ENCODE measurements at regions of chr15 and their contacts with region 1.

Region 1: DNA sequence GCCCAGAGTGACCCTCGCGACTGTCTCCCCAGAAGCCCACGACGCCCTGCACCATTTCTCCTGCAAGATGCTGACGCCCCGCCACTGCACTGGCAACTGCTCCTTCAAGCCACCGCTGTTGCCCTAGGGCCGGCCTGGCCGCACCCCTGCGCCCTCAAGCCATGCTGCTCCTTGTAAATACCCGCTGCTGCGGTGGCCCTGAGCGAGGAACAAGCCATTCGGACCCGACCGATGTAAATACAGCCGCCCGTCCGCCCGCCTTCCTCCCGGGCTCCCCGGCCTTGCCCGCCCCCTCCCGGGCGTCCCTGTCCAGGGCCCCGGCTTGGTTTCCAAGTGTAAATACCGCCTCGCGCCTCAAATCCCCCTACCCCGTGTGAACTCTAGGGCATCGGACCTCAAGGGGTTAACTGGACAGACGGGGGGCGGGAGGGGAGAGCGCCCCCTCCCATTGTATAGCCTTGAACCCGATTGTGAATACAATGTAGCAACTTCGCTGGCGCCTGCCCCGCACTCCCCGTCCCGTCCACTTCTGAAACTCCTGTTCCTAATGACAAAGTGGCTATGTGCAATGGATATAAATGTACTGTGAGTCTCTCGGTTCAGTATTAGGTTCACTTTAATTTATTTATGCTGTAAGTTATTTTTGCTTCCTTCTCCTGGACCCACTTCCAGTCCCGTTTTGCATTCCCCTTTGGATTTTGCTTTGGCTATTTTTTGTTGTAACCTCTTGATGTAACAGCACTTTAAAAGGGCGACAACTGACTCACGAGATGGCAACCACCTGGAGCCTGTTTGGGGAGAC is 5.9 kb downstream of the RNU6-1 start:
- DNase-seq: peak in 2 of 5 donors; percentile 31 to 34
- H3K4me3 ChIP-seq: peak overlapping the region; percentile 27
- H3K27ac ChIP-seq: no peak overlapping the region
- H3K4me1 ChIP-seq: peaks cover 19% of the 10 kb centered on the region
- H3K27me3 ChIP-seq: peaks cover 12% of the 10 kb centered on the region
- CTCF ChIP-seq: peak in 1 of 3 donors; percentile 25
- EP300 ChIP-seq: no peak
- POLR2A ChIP-seq: no peak

Region 2: GRCh38 chr15:67456677-67457529 is 377.0 kb before region 1 on chr15:
- intact Hi-C with region 1: loop called in 3 of 4 experiments (anchors 5 to 10 kb)
- DNase-seq: peak; percentile 56 to 78 (median 72)
- H3K4me3 ChIP-seq: no peak overlapping the region
- H3K27ac ChIP-seq: no peak overlapping the region
- H3K4me1 ChIP-seq: no peaks in the 10 kb centered on the region
- H3K27me3 ChIP-seq: no peaks in the 10 kb centered on the region
- CTCF ChIP-seq: peak in 2 of 3 donors; percentile 22 to 51
- EP300 ChIP-seq: no peak
- POLR2A ChIP-seq: no peak